Heart left ventricle (tissue), 16 donors: ENCODE measurements at regions of chr7 and their contacts with region 1.

Region 1: GRCh38 chr7:127585044-127585953 is at the start of gene GCC1:
- DNase-seq: peak; percentile 92 to 97 (median 93)
- ATAC-seq: peak; percentile 75 to 91 (median 86)
- H3K4me3 ChIP-seq: peak within 1 kb of the TSS; percentile 53 to 99 (median 82)
- H3K27ac ChIP-seq: peak within 1 kb of the TSS; percentile 14 to 95 (median 90)
- H3K4me1 ChIP-seq: peaks cover 19 to 77% (median 57%) of the 10 kb centered on the region in 12 donors
- H3K27me3 ChIP-seq: no peaks in the 10 kb centered on the region
- CTCF ChIP-seq: no peak
- POLR2A ChIP-seq: peak in 1 of 2 donors; percentile 95
- total RNA-seq, gene GCC1: 5.8 to 12.8 (median 8.0) TPM

Region 2: GRCh38 chr7:127392566-127393367 is 192.5 kb before region 1 on chr7 and contains the start of gene ZNF800:
- intact Hi-C with region 1: loop called in 7 of 10 experiments (anchors 2 to 10 kb)
- DNase-seq: peak; percentile 93 to 95 (median 94)
- ATAC-seq: peak; percentile 99
- H3K4me3 ChIP-seq: peak within 1 kb of the TSS; percentile 76 to 99 (median 90)
- H3K27ac ChIP-seq: peak within 1 kb of the TSS; percentile 88 to 99 (median 94)
- H3K4me1 ChIP-seq: peaks cover 0 to 47% (median 20%) of the 10 kb centered on the region in 12 donors
- H3K27me3 ChIP-seq: no peaks in the 10 kb centered on the region
- CTCF ChIP-seq: peak in 1 of 12 donors; percentile 5
- POLR2A ChIP-seq: peak; percentile 16 to 86
- total RNA-seq, gene ZNF800: 20.3 to 34.7 (median 22.9) TPM